Activated CD4-positive, alpha-beta T cell treated with anti-CD3 and anti-CD28 coated beads for 36 hours (primary cell): ENCODE measurements at regions of chr1 and their contacts with region 1.

Region 1: GRCh38 chr1:210709701-210710100 is 381.0 kb downstream of the HHAT start:
- DNase-seq: no peak
- ATAC-seq: no peak
- H3K4me3 Mint-ChIP-seq: no peak overlapping the region
- H3K27ac Mint-ChIP-seq: no peak overlapping the region
- H3K4me1 Mint-ChIP-seq: no peaks in the 10 kb centered on the region
- H3K27me3 Mint-ChIP-seq: no peaks in the 10 kb centered on the region

Region 2: DNA sequence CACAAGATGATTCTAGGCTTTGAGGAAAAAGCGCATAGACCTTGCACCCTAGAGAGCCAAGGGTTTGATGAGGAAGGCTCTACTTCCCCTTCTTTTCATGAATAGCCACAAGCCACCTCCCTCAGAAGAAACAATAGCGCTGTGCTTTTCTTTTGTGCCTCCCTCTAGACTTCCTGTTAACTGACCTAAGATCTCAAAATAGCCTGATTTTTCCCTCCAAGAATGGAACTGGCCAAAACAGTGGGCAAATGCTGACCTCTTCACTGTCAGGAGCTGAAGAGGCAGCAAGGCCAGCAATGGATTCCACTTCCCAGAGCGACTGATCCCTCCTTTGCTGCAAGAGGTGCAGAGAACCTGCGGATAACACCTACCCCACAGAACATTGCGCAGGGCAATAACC is 61.4 kb after region 1 on chr1:
- CTCF ChIA-PET with region 1: no interaction called
- POLR2A ChIA-PET with region 1: interaction called, 10 read pairs
- intact Hi-C with region 1: no loop called
- DNase-seq: no peak
- ATAC-seq: no peak
- H3K4me3 Mint-ChIP-seq: no peak overlapping the region
- H3K27ac Mint-ChIP-seq: no peak overlapping the region
- H3K4me1 Mint-ChIP-seq: no peaks in the 10 kb centered on the region
- H3K27me3 Mint-ChIP-seq: peaks cover 9% of the 10 kb centered on the region

Region 3: GRCh38 chr1:210815641-210816550 is 106.2 kb after region 1 on chr1:
- CTCF ChIA-PET with region 1: no interaction called
- POLR2A ChIA-PET with region 1: no interaction called
- intact Hi-C with region 1: no loop called
- DNase-seq: no peak
- ATAC-seq: no peak
- H3K4me3 Mint-ChIP-seq: no peak overlapping the region
- H3K27ac Mint-ChIP-seq: no peak overlapping the region
- H3K4me1 Mint-ChIP-seq: no peaks in the 10 kb centered on the region
- H3K27me3 Mint-ChIP-seq: peaks cover 6% of the 10 kb centered on the region